ENCODE measurements at regions of chr14 and their contacts with region 1.

Region 1: GRCh38 chr14:67704484-67705089 is 2.9 kb downstream of the RDH12 start:
- DNase-seq: no peak
- H3K4me3 ChIP-seq: no peak overlapping the region
- H3K27ac ChIP-seq: no peak overlapping the region
- H3K4me1 ChIP-seq: no peaks in the 10 kb centered on the region
- H3K27me3 ChIP-seq: no peaks in the 10 kb centered on the region
- CTCF ChIP-seq: peak in 2 of 3 experiments; percentile 66 to 73; a peak in 3 of 4 replicates
- EP300 ChIP-seq: no peak
- POLR2A ChIP-seq: no peak
- RAD21 ChIP-seq: peak; percentile 88 to 89

Region 2: DNA sequence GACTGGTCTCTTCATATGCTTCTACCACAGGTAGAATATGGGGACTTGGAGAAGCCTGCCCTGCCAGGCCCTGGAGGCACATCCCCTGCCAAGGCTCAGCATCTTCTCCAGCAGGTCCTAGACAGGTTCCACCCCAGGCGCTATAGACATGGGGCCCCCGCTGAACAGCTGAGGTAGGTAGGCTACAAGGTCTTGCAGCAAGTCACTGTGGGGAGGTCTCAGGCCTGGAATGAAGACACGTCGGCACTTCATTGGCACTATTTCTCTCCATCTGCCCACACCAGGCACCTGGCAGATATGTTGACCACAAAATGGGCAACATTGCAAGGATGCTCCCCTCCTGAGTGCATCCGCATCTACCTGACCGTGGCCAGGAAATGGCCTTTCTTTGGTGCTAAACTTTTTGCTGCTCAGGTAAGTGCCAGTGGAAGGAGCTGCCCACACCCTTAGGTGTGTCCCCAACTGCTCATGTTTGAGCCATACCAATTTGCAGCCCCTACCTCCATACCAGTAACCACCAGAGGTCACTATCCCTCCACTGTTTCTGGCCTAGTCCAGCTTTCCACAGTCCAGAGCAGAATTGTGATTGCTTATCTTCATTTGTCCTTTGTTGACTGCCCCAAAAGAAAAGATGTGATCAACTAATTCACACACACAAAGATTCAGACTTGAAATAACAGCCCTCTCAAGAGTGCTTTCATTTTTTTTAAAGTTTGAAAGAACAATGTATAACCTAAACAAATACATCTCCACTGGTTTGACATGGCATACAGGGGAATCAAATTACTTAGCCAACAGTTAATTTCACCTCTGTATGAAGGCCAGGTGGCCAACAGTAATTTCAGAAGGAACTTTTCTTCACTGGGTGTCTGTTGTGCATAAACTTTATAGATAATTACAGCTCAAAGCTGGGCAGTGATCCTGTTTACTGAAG is 120.6 kb before region 1 on chr14:
- CTCF ChIA-PET with region 1: interaction called, 147 read pairs
- POLR2A ChIA-PET with region 1: no interaction called
- DNase-seq: no peak
- H3K4me3 ChIP-seq: no peak overlapping the region
- H3K27ac ChIP-seq: no peak overlapping the region
- H3K4me1 ChIP-seq: no peaks in the 10 kb centered on the region
- H3K27me3 ChIP-seq: no peaks in the 10 kb centered on the region
- CTCF ChIP-seq: peak; percentile 54 to 83 (median 80)
- EP300 ChIP-seq: no peak
- POLR2A ChIP-seq: no peak
- RAD21 ChIP-seq: peak; percentile 89 to 90

Region 3: DNA sequence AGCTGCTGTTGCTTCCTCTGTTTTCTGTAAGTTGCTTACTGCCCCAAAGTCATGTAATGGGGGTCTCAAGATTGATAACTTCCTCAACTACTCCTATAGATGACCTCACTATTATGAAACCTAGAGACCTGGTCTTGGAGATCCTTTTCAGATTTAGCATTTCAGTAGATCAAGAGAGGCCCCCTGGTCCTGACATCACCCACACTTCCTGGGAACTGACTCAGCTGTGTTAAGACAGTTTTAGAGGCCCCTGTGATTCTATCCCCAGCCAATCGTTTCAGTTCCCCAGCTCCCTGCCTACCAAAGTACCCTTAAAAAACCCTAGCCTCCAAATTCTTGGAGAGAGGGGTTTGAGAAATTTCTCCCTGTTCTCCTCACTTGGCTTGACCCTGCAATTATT is 94.1 kb before region 1 on chr14:
- CTCF ChIA-PET with region 1: interaction called, 16 read pairs
- POLR2A ChIA-PET with region 1: no interaction called
- DNase-seq: no peak
- H3K4me3 ChIP-seq: no peak overlapping the region
- H3K27ac ChIP-seq: no peak overlapping the region
- H3K4me1 ChIP-seq: peaks cover 0 to 8% (median 2%) of the 10 kb centered on the region in 4 experiments; a peak in 4 of 7 replicates
- H3K27me3 ChIP-seq: peaks cover 17 to 73% (median 55%) of the 10 kb centered on the region in 4 experiments
- CTCF ChIP-seq: no peak
- EP300 ChIP-seq: no peak
- POLR2A ChIP-seq: no peak
- RAD21 ChIP-seq: no peak

Region 4: DNA sequence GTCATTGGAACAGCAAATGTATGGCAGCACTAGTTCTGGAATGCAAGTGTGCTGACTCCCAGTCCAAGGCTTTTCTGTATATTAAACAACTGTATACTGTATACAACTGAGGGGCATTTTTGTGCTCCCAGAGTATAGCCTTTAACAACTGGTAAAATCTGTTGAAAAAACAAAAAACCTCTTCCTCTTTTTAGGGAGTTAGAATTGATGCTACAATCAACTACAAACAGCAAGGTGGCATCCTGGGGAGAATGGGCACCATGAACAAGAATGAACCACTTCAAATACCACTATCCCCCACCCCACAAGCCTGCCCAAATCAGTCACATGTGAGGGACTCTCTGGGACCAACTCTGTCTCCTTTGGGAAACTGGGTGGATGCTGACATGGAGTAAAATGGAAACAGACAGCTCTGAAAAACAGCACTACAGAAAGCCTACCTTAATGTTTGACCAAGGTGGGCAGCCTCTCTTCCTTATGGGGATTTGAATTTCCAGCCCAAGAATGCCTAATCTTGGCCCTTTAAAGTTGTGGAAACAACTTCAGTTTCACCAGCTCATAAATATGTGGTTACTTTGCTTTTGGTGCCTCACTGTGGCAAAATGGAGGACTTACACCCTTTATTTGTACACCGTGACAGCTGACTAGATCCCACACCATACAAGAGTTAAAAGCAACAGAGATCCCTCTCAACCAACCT is 37.7 kb before region 1 on chr14:
- CTCF ChIA-PET with region 1: interaction called, 24 read pairs
- POLR2A ChIA-PET with region 1: interaction called, 4 read pairs
- DNase-seq: no peak
- H3K4me3 ChIP-seq: no peak overlapping the region
- H3K27ac ChIP-seq: no peak overlapping the region
- H3K4me1 ChIP-seq: no peaks in the 10 kb centered on the region
- H3K27me3 ChIP-seq: no peaks in the 10 kb centered on the region
- CTCF ChIP-seq: peak in 2 of 3 experiments; percentile 71; a peak in 3 of 4 replicates
- EP300 ChIP-seq: no peak
- POLR2A ChIP-seq: no peak
- RAD21 ChIP-seq: peak; percentile 81 to 82

Region 5: DNA sequence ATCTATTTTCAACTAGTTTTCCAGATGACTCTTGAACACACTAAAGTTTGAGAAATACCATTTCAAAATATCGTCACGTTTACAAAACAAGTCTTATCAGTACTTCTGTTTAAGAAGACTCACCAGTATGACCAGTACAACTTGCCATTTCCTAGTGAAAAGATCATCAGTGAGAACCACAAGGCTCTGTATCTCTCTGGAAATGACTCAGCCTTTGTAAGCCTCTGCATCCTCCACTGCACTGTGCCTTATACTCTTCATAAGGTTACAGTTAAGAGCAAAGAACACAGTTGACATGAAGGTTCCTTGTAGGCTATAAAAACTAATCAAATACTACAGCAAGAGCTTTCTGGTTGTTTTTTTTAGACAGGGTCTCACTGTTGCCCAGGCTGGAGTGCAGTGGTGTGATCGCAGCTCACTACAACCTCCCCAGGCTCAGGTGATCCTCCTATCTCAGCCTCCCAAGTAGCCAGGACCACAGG is 24.4 kb before region 1 on chr14:
- CTCF ChIA-PET with region 1: interaction called, 10 read pairs
- POLR2A ChIA-PET with region 1: no interaction called
- DNase-seq: no peak
- H3K4me3 ChIP-seq: no peak overlapping the region
- H3K27ac ChIP-seq: no peak overlapping the region
- H3K4me1 ChIP-seq: no peaks in the 10 kb centered on the region; a peak in 2 of 7 replicates
- H3K27me3 ChIP-seq: no peaks in the 10 kb centered on the region; a peak in 1 of 7 replicates
- CTCF ChIP-seq: no peak
- EP300 ChIP-seq: no peak
- POLR2A ChIP-seq: no peak
- RAD21 ChIP-seq: no peak

Region 6: DNA sequence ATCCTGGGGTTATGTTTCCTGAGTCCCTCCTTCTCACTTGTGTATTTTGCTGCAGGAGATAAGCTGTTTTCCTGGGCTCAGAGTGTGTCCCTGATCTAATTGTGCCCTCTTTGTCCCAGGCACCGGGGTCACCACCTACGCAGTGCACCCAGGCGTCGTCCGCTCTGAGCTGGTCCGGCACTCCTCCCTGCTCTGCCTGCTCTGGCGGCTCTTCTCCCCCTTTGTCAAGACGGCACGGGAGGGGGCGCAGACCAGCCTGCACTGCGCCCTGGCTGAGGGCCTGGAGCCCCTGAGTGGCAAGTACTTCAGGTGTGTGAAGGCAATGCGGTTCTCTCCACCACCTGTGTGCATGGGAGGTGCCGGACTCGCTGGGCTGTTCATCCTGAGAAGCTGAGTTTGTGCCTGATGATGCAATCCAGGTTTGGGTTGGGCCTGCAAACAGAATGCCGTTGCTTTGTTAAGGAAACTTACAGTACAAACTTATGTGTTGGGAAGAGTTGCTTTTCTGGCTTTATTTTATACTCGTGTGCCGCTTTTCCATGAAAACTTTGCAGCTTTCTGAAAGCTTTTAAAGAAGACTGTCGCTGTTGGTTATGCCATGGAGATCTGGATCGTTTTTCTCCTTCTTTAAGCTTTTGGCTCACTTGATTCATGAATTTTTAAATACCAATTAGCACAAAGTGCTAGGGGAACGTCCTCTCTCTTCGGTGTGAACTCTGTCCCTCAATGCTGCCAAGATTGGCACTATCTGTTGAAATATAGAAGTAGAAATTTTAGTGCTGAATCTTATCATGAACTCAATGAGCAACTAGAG is 24.7 kb after region 1 on chr14:
- CTCF ChIA-PET with region 1: interaction called, 11 read pairs
- POLR2A ChIA-PET with region 1: interaction called, 6 read pairs
- DNase-seq: peak; percentile 51 to 77
- H3K4me3 ChIP-seq: peak overlapping the region in 3 of 4 experiments; percentile 13 to 37 (median 19); a peak in 4 of 8 replicates
- H3K27ac ChIP-seq: no peak overlapping the region
- H3K4me1 ChIP-seq: peaks cover 1 to 11% (median 6%) of the 10 kb centered on the region in 4 experiments; a peak in 5 of 7 replicates
- H3K27me3 ChIP-seq: no peaks in the 10 kb centered on the region; a peak in 1 of 7 replicates
- CTCF ChIP-seq: no peak
- EP300 ChIP-seq: no peak
- POLR2A ChIP-seq: peak in 1 of 2 experiments; percentile 66; a peak in 2 of 3 replicates
- RAD21 ChIP-seq: 0 out of 4 replicates have a peak, but pooled peaks of 1 of the 2 experiments have one; percentile 9

Region 7: GRCh38 chr14:67766172-67766680 is 61.6 kb after region 1 on chr14:
- CTCF ChIA-PET with region 1: no interaction called
- POLR2A ChIA-PET with region 1: no interaction called
- DNase-seq: no peak
- H3K4me3 ChIP-seq: no peak overlapping the region
- H3K27ac ChIP-seq: no peak overlapping the region
- H3K4me1 ChIP-seq: no peaks in the 10 kb centered on the region
- H3K27me3 ChIP-seq: no peaks in the 10 kb centered on the region
- CTCF ChIP-seq: no peak
- EP300 ChIP-seq: no peak
- POLR2A ChIP-seq: no peak
- RAD21 ChIP-seq: 0 out of 4 replicates have a peak, but pooled peaks of 1 of the 2 experiments have one; percentile 8

Region 8: GRCh38 chr14:68157971-68158371 is 453.4 kb after region 1 on chr14:
- CTCF ChIA-PET with region 1: no interaction called
- POLR2A ChIA-PET with region 1: no interaction called
- DNase-seq: no peak
- H3K4me3 ChIP-seq: no peak overlapping the region
- H3K27ac ChIP-seq: no peak overlapping the region
- H3K4me1 ChIP-seq: no peaks in the 10 kb centered on the region
- H3K27me3 ChIP-seq: no peaks in the 10 kb centered on the region
- CTCF ChIP-seq: no peak
- EP300 ChIP-seq: no peak
- POLR2A ChIP-seq: no peak
- RAD21 ChIP-seq: no peak